SK-N-SH (cell line): ENCODE measurements at regions of chr1 and their contacts with region 1.

Region 1: DNA sequence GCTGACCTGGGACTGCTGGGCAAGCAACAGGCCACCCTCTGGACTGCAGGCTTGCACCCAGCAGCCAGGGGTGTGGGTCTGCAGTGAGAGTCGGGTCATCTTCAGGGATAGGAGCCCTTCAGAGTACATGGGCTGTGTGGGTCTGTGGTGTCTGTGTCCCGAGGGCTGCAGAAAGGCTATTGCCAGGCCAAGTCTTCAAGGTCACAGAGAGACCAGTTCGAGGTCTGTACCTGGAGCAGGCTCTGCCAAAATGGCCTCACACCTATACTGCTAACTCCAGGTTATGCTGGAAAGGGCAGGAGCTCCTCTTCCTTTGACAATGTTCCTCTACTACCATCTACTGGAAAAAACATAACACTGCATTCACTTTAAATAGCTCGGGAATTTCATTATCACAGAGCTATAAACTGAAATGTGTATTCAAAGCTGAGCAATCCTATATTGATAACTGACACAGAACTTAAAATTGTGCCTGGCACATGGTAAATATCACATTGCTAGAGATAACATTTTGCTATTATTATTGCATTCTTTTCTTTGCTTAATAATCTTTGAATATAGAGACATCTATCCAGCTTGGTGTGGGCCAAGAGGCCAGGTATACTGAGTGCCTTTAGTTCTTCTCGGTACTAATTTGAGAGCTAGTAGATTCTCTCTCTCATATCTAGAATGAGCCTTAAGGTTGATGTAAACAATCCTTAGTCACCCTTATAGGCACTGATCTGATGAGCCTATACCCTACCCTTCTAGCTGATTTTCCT is 6.9 kb upstream of the DNAH14 start:
- DNase-seq: peak; percentile 61
- H3K4me3 ChIP-seq: peak overlapping the region in 1 of 2 experiments; percentile 35; a peak in 1 of 4 replicates
- H3K27ac ChIP-seq: no peak overlapping the region
- H3K4me1 ChIP-seq: no peaks in the 10 kb centered on the region; a peak in 1 of 4 replicates
- H3K27me3 ChIP-seq: no peaks in the 10 kb centered on the region
- CTCF ChIP-seq: peak; percentile 86
- EP300 ChIP-seq: no peak
- RAD21 ChIP-seq: peak; percentile 91

Region 2: GRCh38 chr1:223802602-223803001 is 1120.0 kb before region 1 on chr1:
- CTCF ChIA-PET with region 1: no interaction called
- POLR2A ChIA-PET with region 1: no interaction called
- DNase-seq: no peak
- H3K4me3 ChIP-seq: no peak overlapping the region
- H3K27ac ChIP-seq: no peak overlapping the region
- H3K4me1 ChIP-seq: no peaks in the 10 kb centered on the region
- H3K27me3 ChIP-seq: no peaks in the 10 kb centered on the region
- CTCF ChIP-seq: no peak
- EP300 ChIP-seq: no peak
- RAD21 ChIP-seq: no peak

Region 3: DNA sequence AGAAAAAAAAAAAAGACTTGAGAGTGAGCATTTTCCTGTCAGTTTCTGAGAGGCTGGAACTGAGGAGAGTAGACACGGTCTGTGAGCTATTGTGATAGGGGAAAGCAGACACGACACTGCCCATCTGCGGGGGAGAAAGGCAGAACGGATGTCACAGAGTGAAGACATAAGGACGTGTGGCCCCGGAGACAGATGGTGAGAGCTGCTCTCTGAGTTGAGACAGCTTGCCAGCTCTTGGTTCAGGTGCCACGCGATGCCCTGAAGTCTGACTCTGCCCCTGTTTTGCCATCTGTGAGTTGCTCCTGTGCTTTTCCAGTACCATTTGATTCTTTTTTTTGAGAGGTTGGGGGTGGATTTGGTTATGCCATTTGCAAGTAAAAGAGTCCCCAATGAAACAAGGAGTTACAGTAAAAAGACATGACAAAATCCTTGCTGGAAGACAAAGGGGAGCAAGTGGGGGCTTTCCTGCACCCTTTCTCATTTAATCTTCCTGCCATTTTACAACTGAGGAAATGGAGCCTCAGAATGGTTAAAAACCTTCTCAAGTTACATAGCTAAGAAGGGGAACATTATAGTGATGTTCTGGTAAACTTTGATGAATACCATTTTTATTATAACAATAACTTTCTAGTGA is 122.0 kb before region 1 on chr1:
- CTCF ChIA-PET with region 1: no interaction called
- POLR2A ChIA-PET with region 1: no interaction called
- DNase-seq: no peak
- H3K4me3 ChIP-seq: no peak overlapping the region
- H3K27ac ChIP-seq: no peak overlapping the region
- H3K4me1 ChIP-seq: no peaks in the 10 kb centered on the region; a peak in 1 of 4 replicates
- H3K27me3 ChIP-seq: no peaks in the 10 kb centered on the region
- CTCF ChIP-seq: no peak
- EP300 ChIP-seq: no peak
- RAD21 ChIP-seq: no peak

Region 4: DNA sequence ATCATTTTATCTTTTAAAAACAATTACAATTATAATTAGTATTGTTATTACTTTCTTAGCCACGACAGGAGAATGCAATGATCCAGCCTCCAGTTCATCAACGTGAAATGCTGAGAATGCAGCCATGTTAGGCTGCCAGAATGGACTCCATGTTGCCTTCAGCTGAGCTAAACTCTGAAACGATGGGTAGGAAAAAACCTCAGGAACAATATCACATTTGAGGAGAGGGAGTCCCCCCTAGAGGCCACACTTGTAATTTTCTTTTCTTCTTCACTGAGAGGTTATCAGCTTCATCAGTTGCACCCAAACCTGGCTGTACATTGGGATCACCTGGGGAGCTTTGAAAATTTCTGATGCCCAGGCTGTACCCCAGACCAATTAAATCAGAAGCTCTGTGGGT is 27.7 kb before region 1 on chr1:
- CTCF ChIA-PET with region 1: interaction called, 18 read pairs
- POLR2A ChIA-PET with region 1: no interaction called
- DNase-seq: peak; percentile 6
- H3K4me3 ChIP-seq: no peak overlapping the region; a peak in 1 of 4 replicates
- H3K27ac ChIP-seq: no peak overlapping the region
- H3K4me1 ChIP-seq: no peaks in the 10 kb centered on the region
- H3K27me3 ChIP-seq: no peaks in the 10 kb centered on the region
- CTCF ChIP-seq: peak; percentile 40
- EP300 ChIP-seq: no peak
- RAD21 ChIP-seq: peak; percentile 40

Region 5: GRCh38 chr1:224901087-224901810 is 21.3 kb before region 1 on chr1:
- CTCF ChIA-PET with region 1: interaction called, 18 read pairs
- POLR2A ChIA-PET with region 1: no interaction called
- DNase-seq: no peak
- H3K4me3 ChIP-seq: no peak overlapping the region
- H3K27ac ChIP-seq: no peak overlapping the region
- H3K4me1 ChIP-seq: peaks cover 0 to 7% of the 10 kb centered on the region in 2 experiments; a peak in 2 of 4 replicates
- H3K27me3 ChIP-seq: no peaks in the 10 kb centered on the region
- CTCF ChIP-seq: no peak
- EP300 ChIP-seq: no peak
- RAD21 ChIP-seq: no peak